ENCODE measurements at regions of chr13 and their contacts with region 1.

Region 1: GRCh38 chr13:110593430-110594130 is 21.8 kb upstream of the NAXD start:
- DNase-seq: peak; percentile 39
- H3K4me3 ChIP-seq: no peak overlapping the region
- H3K27ac ChIP-seq: no peak overlapping the region
- H3K4me1 ChIP-seq: peaks cover 16% of the 10 kb centered on the region
- H3K27me3 ChIP-seq: no peaks in the 10 kb centered on the region
- CTCF ChIP-seq: peak; percentile 51 to 61

Region 2: DNA sequence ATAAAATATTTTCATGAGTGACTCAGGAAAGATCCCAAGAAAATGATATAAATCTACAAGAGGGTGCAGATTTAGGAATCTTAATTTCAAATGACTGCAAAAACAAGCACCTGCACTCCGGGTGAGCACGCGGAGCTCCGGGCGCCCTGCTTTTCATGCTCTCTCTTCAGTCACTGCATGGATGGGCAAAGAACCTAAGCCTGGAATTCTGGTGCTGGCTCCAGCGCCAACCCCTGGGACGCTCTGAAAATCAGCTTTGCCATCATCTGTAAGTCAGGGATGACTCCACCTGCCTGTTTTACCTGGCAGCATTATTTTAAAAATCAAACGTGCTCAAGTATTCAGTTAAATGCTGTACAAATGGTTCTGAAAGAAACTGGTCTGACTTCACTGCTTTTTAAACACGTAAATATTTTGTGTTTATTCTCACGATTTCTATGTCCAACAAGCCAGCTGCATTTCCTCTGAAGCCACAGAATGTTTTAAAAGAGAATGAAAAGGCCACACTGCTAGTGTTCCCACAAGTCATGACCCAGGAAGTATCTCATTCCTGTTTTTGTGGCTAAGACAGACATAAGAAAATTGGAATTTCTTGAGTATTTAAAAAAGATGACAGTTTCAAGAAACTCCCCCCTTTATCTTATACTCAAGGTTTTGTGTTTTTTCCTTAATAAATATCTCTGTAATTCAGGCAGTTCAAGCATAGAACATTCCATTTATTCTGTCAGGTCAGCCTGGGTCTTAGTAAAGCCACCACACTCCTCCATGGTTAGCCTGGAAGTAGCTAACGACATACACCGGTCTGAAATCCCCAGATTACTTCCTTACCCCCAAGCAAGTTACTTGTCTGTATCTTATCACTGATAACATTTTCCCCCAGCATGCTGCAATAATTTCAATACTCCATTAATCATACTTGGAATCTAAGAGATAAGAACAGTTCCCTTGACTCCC is 367.7 kb before region 1 on chr13:
- CTCF ChIA-PET with region 1: no interaction called
- dilution Hi-C with region 1: no loop called
- in situ Hi-C with region 1: no loop called
- intact Hi-C with region 1: loop called (anchors 2 kb)
- DNase-seq: no peak
- H3K4me3 ChIP-seq: no peak overlapping the region
- H3K27ac ChIP-seq: no peak overlapping the region
- H3K4me1 ChIP-seq: peaks cover 6% of the 10 kb centered on the region
- H3K27me3 ChIP-seq: no peaks in the 10 kb centered on the region
- CTCF ChIP-seq: no peak

Region 3: GRCh38 chr13:110615322-110616102 is 21.9 kb after region 1 on chr13 and contains the start of gene NAXD:
- CTCF ChIA-PET with region 1: no interaction called
- dilution Hi-C with region 1: no loop called
- in situ Hi-C with region 1: no loop called
- intact Hi-C with region 1: loop called (anchors 2 kb)
- DNase-seq: peak; percentile 93
- H3K4me3 ChIP-seq: peak within 1 kb of the TSS; percentile 62 to 83 (median 70)
- H3K27ac ChIP-seq: peak within 1 kb of the TSS; percentile 52
- H3K4me1 ChIP-seq: peaks cover 28% of the 10 kb centered on the region
- H3K27me3 ChIP-seq: no peaks in the 10 kb centered on the region
- CTCF ChIP-seq: no peak
- total RNA-seq, gene NAXD: 18.3 to 27.0 TPM

Region 4: GRCh38 chr13:110652231-110652730 is 58.7 kb after region 1 on chr13:
- CTCF ChIA-PET with region 1: no interaction called
- dilution Hi-C with region 1: no loop called
- in situ Hi-C with region 1: no loop called
- intact Hi-C with region 1: no loop called
- DNase-seq: no peak
- H3K4me3 ChIP-seq: no peak overlapping the region
- H3K27ac ChIP-seq: no peak overlapping the region
- H3K4me1 ChIP-seq: no peaks in the 10 kb centered on the region
- H3K27me3 ChIP-seq: no peaks in the 10 kb centered on the region
- CTCF ChIP-seq: no peak

Region 5: GRCh38 chr13:111049802-111050538 is 456.4 kb after region 1 on chr13:
- CTCF ChIA-PET with region 1: no interaction called
- dilution Hi-C with region 1: no loop called
- in situ Hi-C with region 1: no loop called
- intact Hi-C with region 1: loop called (anchors 1 kb)
- DNase-seq: no peak
- H3K4me3 ChIP-seq: no peak overlapping the region
- H3K27ac ChIP-seq: no peak overlapping the region
- H3K4me1 ChIP-seq: no peaks in the 10 kb centered on the region
- H3K27me3 ChIP-seq: no peaks in the 10 kb centered on the region
- CTCF ChIP-seq: peak; percentile 30 to 56

Measured in mammary epithelial cell (primary cell).